Body of pancreas (tissue), 4 donors: ENCODE measurements at regions of chr16 and their contacts with region 1.

Region 1: DNA sequence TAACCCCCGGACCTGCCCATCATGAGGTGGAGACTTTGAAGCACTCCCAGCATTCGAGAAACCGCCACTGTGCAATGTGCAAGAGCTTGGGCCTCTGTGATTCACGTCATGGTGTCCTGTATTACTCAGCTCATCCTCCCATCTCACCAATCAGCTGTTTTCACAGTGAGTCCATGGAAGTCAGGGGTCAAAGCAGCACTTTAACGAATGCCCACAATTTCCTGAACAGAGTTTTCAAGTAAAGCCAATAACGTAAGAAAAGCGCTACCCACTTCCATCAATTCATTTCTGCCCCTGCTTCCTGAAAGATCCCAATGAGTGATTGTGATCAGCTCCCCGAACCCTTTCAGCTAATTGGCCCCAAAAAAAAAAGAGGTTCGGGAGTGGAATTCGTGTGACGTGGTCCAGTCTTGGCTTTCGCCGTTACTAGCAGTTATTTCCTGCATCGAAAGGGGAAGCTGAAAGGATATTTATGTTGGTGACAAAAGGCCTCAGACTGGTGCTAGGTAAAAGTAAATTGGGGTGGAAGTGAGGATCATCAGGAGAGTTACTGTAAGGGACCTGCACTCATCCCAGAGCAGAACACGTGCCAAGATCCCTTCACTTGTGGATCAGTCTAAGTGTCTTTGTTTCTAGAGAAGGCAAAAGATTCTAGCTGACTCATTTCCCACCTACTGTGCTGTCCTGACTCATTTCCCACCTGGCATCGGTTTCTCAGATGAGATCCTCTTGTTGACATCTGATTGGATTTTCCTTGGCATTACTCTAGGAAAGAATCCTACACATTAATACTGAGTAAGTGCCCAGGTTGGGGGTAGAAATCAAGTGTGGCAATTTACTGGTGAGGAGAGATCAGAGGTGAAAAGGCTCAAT is 136.7 kb upstream of the NUDT7 start:
- DNase-seq: no peak
- ATAC-seq: no peak
- H3K4me3 ChIP-seq: no peak overlapping the region
- H3K27ac ChIP-seq: no peak overlapping the region
- H3K4me1 ChIP-seq: no peaks in the 10 kb centered on the region
- H3K27me3 ChIP-seq: no peaks in the 10 kb centered on the region
- CTCF ChIP-seq: no peak
- POLR2A ChIP-seq: no peak

Region 2: GRCh38 chr16:77236063-77236511 is 349.5 kb before region 1 on chr16:
- intact Hi-C with region 1: loop called (anchors 5 kb)
- DNase-seq: peak; percentile 87 to 91 (median 90)
- ATAC-seq: peak; percentile 98
- H3K4me3 ChIP-seq: no peak overlapping the region
- H3K27ac ChIP-seq: no peak overlapping the region
- H3K4me1 ChIP-seq: peaks cover 4% of the 10 kb centered on the region
- H3K27me3 ChIP-seq: no peaks in the 10 kb centered on the region
- CTCF ChIP-seq: peak; percentile 97 to 100 (median 100)
- POLR2A ChIP-seq: no peak

Region 3: DNA sequence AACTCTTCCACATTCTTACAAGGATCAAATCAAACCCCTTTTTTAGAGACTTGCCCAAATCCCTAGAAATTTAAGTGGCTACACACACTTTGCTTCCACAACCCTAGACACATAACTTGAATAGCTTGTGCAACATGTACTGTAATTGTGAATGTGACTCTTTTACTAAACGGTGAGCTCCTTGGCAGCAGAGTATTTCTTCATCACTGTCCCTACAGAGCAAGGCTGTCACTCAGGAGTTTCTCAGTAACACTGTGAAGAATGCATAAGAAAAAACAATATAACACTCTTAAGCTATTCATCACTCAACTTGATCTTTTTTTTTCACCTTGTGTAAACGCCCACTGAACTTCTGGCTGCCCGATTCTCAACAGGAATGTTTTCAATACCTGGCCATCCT is 97.0 kb before region 1 on chr16:
- intact Hi-C with region 1: no loop called
- DNase-seq: no peak
- ATAC-seq: no peak
- H3K4me3 ChIP-seq: no peak overlapping the region
- H3K27ac ChIP-seq: no peak overlapping the region
- H3K4me1 ChIP-seq: no peaks in the 10 kb centered on the region
- H3K27me3 ChIP-seq: no peaks in the 10 kb centered on the region
- CTCF ChIP-seq: no peak
- POLR2A ChIP-seq: no peak